SK-N-SH (cell line): ENCODE measurements at regions of chr11 and their contacts with region 1.

Region 1: GRCh38 chr11:8192016-8192895 is 23.4 kb upstream of the RIC3 start:
- DNase-seq: peak; percentile 91
- H3K4me3 ChIP-seq: peak overlapping the region in 1 of 2 experiments; percentile 9; a peak in 1 of 4 replicates
- H3K27ac ChIP-seq: no peak overlapping the region
- H3K4me1 ChIP-seq: peaks cover 0 to 12% of the 10 kb centered on the region in 2 experiments; a peak in 1 of 4 replicates
- H3K27me3 ChIP-seq: no peaks in the 10 kb centered on the region; the same call in 1 of the 2 replicates
- CTCF ChIP-seq: peak; percentile 81
- EP300 ChIP-seq: no peak
- RAD21 ChIP-seq: peak; percentile 97

Region 2: GRCh38 chr11:7892840-7893254 is 299.4 kb before region 1 on chr11:
- CTCF ChIA-PET with region 1: no interaction called
- POLR2A ChIA-PET with region 1: no interaction called
- DNase-seq: peak; percentile 56
- H3K4me3 ChIP-seq: no peak overlapping the region; a peak in 1 of 4 replicates
- H3K27ac ChIP-seq: 0 out of 4 replicates have a peak overlapping the region, but pooled peaks of 1 of the 2 experiments have one; percentile 4
- H3K4me1 ChIP-seq: no peaks in the 10 kb centered on the region
- H3K27me3 ChIP-seq: no peaks in the 10 kb centered on the region
- CTCF ChIP-seq: peak; percentile 80
- EP300 ChIP-seq: no peak
- RAD21 ChIP-seq: peak; percentile 78

Region 3: DNA sequence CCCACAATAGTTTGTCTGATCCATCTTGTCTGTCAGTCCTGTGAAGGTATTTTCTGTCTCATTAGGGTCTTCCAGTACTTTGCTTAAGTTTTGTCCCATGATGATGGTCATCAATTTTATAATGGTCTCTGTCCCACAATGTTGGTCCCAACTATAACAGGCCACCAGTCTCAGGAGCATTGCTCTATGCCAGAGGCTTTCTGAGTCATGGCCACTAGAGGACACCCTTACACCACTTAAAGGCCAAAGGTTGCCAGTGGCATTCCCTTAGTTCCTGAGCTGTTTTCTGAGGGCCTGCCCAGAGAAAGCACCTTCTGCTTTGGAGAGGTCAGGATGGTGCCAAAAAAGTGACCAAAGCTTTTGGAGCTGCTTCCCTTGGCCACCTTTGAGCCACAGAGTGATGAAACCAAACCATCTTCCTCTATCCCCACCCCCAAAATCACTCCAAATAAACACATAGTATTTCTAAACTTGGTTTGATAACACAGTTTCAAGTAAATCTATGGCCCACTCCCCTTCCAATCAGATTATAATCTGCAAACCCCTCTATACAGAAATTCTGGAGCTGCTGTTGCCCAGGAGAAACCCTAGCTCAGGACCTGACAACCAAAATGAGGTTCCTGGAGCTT is 185.8 kb before region 1 on chr11:
- CTCF ChIA-PET with region 1: interaction called, 13 read pairs
- POLR2A ChIA-PET with region 1: no interaction called
- DNase-seq: peak; percentile 77
- H3K4me3 ChIP-seq: peak overlapping the region in 1 of 2 experiments; percentile 16; a peak in 1 of 4 replicates
- H3K27ac ChIP-seq: no peak overlapping the region
- H3K4me1 ChIP-seq: no peaks in the 10 kb centered on the region
- H3K27me3 ChIP-seq: no peaks in the 10 kb centered on the region
- CTCF ChIP-seq: peak; percentile 94
- EP300 ChIP-seq: no peak
- RAD21 ChIP-seq: peak; percentile 100

Region 4: DNA sequence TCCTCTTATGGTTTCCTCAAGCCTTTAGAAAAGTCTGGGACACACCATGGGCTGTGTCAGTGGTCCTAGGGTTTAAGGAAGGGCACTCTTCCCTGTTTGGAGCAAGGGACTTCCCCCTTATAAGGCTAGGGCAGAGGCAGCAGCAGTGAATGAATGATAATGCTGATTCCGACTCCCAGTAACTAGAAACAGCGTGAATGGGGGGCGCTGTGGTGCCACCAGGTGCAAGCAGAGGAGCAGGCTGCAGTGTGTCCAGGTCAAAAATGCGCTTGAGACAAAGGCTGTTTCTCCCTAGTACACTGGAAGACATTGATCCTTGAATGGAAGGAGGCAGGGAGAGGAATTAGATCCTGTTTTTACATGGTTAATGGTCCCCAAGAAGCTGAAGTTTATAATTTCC is 11.8 kb before region 1 on chr11:
- CTCF ChIA-PET with region 1: interaction called, 12 read pairs
- POLR2A ChIA-PET with region 1: no interaction called
- DNase-seq: no peak
- H3K4me3 ChIP-seq: no peak overlapping the region
- H3K27ac ChIP-seq: no peak overlapping the region
- H3K4me1 ChIP-seq: no peaks in the 10 kb centered on the region; a peak in 1 of 4 replicates
- H3K27me3 ChIP-seq: peaks cover 5% of the 10 kb centered on the region; the same call in 1 of the 2 replicates
- CTCF ChIP-seq: no peak
- EP300 ChIP-seq: no peak
- RAD21 ChIP-seq: no peak

Region 5: DNA sequence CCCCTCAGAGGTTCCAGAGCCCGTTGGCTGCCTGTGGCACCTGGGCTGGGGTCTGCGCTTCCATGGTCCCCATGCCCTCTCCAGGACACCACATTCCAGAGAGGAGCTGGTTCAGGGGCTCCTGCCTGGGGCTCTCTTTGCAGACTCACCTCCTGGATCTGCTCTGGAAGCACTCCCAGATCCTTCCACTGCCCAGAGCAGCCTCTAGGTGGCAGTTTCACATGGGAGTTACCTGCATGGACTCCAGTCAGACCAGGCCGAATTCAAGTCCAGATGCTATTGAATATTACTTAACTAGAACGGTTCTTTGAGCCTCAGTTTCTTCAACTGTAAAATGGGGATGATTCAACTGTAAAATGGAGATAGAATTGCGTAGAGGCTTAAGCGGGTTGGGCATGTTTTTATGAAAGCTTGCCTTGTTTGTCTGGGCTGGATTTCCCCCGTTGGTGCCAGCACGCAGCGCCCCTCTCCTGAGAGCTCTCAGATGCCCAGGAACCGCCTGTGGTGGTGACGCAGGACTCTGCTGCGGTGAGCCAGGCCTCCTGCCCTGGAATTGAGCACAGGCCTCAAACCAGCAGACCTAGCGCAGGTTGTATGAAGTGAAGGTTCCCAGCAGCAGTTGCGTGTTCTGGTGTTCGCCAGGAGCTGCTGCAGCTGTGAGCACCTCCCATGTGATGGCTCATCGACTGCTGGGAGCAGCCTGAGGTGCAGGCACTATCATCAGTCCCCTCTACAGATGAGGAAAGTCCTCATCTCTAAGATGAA is 27.2 kb after region 1 on chr11:
- CTCF ChIA-PET with region 1: interaction called, 39 read pairs
- POLR2A ChIA-PET with region 1: no interaction called
- DNase-seq: peak; percentile 80
- H3K4me3 ChIP-seq: no peak overlapping the region
- H3K27ac ChIP-seq: no peak overlapping the region; a peak in 1 of 4 replicates
- H3K4me1 ChIP-seq: peaks cover 0 to 28% of the 10 kb centered on the region in 2 experiments; a peak in 1 of 4 replicates
- H3K27me3 ChIP-seq: no peaks in the 10 kb centered on the region; the same call in 1 of the 2 replicates
- CTCF ChIP-seq: peak; percentile 75
- EP300 ChIP-seq: no peak
- RAD21 ChIP-seq: peak; percentile 69

Region 6: DNA sequence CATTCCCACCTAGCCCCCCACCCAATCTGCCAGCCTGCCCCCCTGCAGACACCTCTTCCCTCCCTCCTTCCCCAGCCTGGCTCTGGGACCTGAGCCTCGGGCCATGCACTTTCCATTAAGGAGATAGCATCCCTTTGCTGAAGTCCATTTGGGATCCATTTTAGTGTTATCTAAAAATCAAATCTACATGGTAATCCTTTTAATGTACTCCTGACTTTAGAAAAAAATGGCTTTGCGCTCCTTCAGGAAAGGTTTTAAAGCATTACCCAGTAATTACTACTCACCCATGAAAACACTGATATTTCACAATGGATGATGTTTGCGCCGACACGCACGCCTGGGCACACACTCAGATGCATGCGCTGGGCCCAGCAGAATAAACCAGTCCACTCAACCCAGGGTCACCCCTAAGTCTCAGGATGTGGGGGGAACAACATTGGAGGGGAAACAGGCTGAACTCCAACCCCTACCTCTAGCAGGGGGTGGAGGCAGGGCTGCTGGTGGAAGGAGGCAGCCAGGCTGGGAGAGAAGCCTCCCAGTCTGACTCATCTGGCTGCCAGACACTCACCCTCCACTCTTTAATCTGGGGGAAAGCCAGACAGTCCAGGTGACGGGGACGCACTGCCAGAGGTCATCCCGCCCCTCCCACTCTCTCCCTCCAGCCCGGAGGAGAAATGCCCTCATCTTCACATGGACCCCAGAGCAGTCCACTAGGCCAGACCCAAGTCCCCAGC is 41.6 kb after region 1 on chr11:
- CTCF ChIA-PET with region 1: interaction called, 17 read pairs
- POLR2A ChIA-PET with region 1: no interaction called
- DNase-seq: peak; percentile 78
- H3K4me3 ChIP-seq: peak overlapping the region in 1 of 2 experiments; percentile 0; a peak in 1 of 4 replicates
- H3K27ac ChIP-seq: peak overlapping the region; percentile 21 to 96; a peak in 3 of 4 replicates
- H3K4me1 ChIP-seq: peaks cover 0 to 92% of the 10 kb centered on the region in 2 experiments; a peak in 2 of 4 replicates
- H3K27me3 ChIP-seq: no peaks in the 10 kb centered on the region
- CTCF ChIP-seq: no peak
- EP300 ChIP-seq: peak; percentile 8 to 98; a peak in 2 of 4 replicates
- RAD21 ChIP-seq: no peak

Region 7: GRCh38 chr11:8309862-8310261 is 117.6 kb after region 1 on chr11:
- CTCF ChIA-PET with region 1: interaction called, 11 read pairs
- POLR2A ChIA-PET with region 1: no interaction called
- DNase-seq: peak; percentile 47
- H3K4me3 ChIP-seq: no peak overlapping the region
- H3K27ac ChIP-seq: no peak overlapping the region
- H3K4me1 ChIP-seq: peaks cover 0 to 2% of the 10 kb centered on the region in 2 experiments; a peak in 1 of 4 replicates
- H3K27me3 ChIP-seq: no peaks in the 10 kb centered on the region
- CTCF ChIP-seq: no peak
- EP300 ChIP-seq: no peak
- RAD21 ChIP-seq: peak; percentile 74

Region 8: DNA sequence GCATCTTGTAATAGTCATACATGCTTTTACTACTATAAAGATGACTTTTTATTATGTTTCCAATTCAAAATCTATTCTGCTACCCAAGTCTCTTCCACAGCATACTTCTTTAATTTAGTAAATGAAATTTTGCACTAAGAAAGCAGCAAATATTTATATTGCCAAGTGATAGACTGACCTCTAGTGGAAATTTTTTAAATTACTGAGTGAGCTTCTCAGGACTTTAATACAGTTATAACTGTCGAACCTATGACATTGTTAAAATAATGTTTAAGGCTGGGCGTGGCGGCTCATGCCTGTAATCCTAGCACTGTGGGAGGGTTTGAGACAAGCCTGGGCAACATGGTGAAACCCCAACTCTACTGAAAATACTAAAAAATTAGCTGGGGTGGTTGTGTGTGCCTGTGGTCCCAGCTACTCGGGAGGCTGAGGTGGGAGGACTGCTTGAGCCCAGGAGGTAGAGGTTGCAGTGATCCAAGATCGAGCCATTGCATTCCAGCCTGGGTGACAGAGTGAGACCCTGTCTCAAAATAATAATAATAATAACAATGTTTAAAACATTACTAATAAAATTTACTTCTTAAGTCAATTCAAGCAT is 374.5 kb after region 1 on chr11:
- CTCF ChIA-PET with region 1: interaction called, 61 read pairs
- POLR2A ChIA-PET with region 1: interaction called, 3 read pairs
- DNase-seq: peak; percentile 14
- H3K4me3 ChIP-seq: peak overlapping the region in 1 of 2 experiments; percentile 17; a peak in 1 of 4 replicates
- H3K27ac ChIP-seq: no peak overlapping the region; a peak in 1 of 4 replicates
- H3K4me1 ChIP-seq: peaks cover 0 to 10% of the 10 kb centered on the region in 2 experiments; a peak in 1 of 4 replicates
- H3K27me3 ChIP-seq: no peaks in the 10 kb centered on the region
- CTCF ChIP-seq: peak; percentile 84
- EP300 ChIP-seq: no peak
- RAD21 ChIP-seq: peak; percentile 89